Heart left ventricle (tissue), 16 donors: ENCODE measurements at regions of chr4 and their contacts with region 1.

Region 1: DNA sequence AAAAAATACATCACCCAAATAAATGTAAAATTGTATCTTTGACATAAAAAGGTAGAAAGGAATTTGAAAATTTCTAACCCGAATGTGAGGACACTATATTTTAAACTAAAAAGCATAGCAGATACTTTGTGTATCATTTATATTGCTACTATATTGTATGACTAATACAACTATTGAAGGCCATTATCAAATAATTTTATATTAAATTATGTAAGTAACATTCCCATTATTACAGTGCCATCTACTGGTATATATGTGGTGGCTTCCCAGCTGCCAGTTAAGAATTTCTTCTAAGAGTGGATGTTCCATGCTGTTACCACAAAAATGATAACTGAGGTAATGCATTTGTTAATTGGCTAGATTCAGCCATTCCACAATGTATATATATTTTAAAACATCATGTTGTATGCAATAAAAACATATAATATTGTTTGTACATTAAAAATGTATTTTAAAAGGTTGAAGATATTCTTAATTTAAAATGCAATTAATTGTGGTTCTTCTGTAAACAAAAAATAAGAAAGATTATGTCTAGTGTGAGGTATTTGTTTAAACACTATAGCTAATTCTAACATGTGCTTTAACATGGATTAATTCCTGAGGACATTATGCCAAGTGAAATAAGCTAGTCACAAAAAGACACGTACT is 65.3 kb downstream of the EGF start:
- DNase-seq: no peak
- ATAC-seq: no peak
- H3K4me3 ChIP-seq: no peak overlapping the region
- H3K27ac ChIP-seq: no peak overlapping the region
- H3K4me1 ChIP-seq: peaks cover 0 to 12% (median 0%) of the 10 kb centered on the region in 12 donors
- H3K27me3 ChIP-seq: no peaks in the 10 kb centered on the region
- CTCF ChIP-seq: peak; percentile 45 to 79 (median 66)
- POLR2A ChIP-seq: no peak

Region 2: GRCh38 chr4:109532182-109532581 is 445.8 kb before region 1 on chr4:
- intact Hi-C with region 1: loop called in 1 of 10 experiments (anchors 5 kb)
- DNase-seq: no peak
- ATAC-seq: no peak
- H3K4me3 ChIP-seq: no peak overlapping the region
- H3K27ac ChIP-seq: no peak overlapping the region
- H3K4me1 ChIP-seq: no peaks in the 10 kb centered on the region
- H3K27me3 ChIP-seq: no peaks in the 10 kb centered on the region
- CTCF ChIP-seq: no peak
- POLR2A ChIP-seq: no peak

Region 3: DNA sequence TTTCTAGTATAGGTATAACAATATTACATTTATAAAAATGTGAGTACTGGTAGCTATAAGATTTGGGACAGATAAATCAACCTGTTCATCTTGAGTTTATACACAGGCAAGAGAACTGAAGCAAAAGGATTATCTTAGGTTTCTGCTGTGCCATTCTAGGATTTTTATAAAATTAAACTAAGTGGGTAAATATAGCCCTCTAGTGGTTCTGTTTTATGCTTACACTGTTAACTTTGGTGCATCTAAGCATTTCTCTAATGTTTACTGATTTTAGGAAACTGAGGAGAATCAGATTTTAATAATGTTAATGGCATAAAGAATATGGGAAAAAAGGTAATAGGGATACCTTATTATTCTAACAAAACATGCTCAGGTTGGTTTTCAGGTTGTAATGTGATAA is 151.3 kb before region 1 on chr4:
- intact Hi-C with region 1: loop called in 3 of 10 experiments (anchors 10 kb)
- DNase-seq: no peak
- ATAC-seq: no peak
- H3K4me3 ChIP-seq: no peak overlapping the region
- H3K27ac ChIP-seq: no peak overlapping the region
- H3K4me1 ChIP-seq: no peaks in the 10 kb centered on the region
- H3K27me3 ChIP-seq: no peaks in the 10 kb centered on the region
- CTCF ChIP-seq: peak; percentile 44 to 66 (median 54)
- POLR2A ChIP-seq: no peak

Region 4: DNA sequence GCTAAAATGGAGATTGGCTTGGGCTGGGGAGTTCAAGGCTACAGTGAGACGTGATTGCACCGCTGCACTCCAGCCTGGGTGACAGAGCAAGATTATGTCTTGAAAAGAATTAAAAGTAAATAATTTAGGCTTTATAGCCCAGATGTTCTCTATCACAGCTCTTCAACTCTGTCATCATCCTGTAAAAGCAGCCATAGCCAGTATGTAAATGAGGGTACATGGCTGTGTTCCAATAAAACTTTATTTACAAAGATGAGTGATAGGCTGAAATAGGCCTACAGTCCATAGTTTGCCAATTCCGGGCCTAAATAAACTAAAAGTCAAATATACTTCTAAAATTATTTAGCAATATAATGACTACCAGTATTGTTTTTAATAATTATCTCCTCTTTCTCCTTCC is 141.0 kb before region 1 on chr4:
- intact Hi-C with region 1: loop called in 2 of 10 experiments (anchors 10 kb)
- DNase-seq: no peak
- ATAC-seq: no peak
- H3K4me3 ChIP-seq: no peak overlapping the region
- H3K27ac ChIP-seq: no peak overlapping the region
- H3K4me1 ChIP-seq: no peaks in the 10 kb centered on the region
- H3K27me3 ChIP-seq: no peaks in the 10 kb centered on the region
- CTCF ChIP-seq: no peak
- POLR2A ChIP-seq: no peak